ENCODE measurements at regions of chr5 and their contacts with region 1.

Region 1: DNA sequence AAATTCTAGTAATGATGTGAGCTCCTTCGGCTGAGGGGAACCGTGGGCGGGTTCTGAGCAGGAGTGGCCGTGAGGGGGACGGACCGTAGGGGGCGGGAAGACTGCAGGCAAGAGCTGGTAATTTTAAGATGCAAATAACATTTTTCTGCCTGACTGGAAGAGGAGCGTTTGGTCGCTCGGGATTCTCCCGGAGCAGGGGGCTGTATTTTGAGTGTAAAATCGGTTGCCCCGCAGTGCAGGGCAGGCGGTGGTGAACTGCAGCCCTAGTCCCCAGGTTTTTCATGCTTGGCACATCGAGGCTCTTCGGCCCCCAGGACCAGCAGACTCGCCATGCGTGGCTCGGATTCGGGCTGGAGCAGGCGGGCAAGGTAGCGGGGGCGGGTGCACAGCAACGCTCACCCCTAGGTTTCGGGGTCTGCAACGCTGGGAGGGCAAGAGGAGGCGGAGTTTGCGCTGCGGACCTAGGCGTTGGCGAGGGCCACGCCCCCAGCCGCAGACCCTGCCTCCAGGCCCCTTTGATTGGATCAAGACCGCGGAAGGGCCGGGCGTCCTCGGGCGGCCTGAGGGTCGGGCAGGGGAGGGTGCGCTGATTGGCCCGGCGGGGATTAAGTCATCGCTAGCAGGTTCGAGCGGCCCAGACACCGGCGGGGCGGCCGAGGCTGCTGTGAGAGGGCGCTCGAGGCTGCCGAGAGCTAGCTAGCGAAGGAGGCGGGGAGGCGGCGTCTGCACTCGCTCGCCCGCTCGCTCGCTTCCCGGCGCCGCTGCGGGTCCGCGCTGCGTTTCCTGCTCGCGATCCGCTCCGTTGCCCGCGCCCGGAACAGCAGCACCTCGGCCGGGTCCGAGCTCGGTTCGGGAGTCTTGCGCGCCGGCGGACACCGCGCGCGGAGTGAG is at the start of gene ARHGAP26:
- DNase-seq: peak; percentile 96
- H3K4me3 ChIP-seq: peak within 1 kb of the TSS; percentile 76
- H3K27ac ChIP-seq: peak within 1 kb of the TSS; percentile 35
- H3K4me1 ChIP-seq: peaks cover 15% of the 10 kb centered on the region
- CTCF ChIP-seq: no peak
- total RNA-seq, gene ARHGAP26: 7.0 and 7.5 TPM in 2 replicates

Region 2: GRCh38 chr5:142800776-142801494 is 30.9 kb after region 1 on chr5:
- CTCF ChIA-PET with region 1: interaction called, 3 read pairs
- POLR2A ChIA-PET with region 1: interaction called, 3 read pairs
- intact Hi-C with region 1: loop called (anchors 1 kb)
- DNase-seq: peak; percentile 85
- H3K4me3 ChIP-seq: peak overlapping the region; percentile 38
- H3K27ac ChIP-seq: peak overlapping the region; percentile 71
- H3K4me1 ChIP-seq: peaks cover 35% of the 10 kb centered on the region
- CTCF ChIP-seq: no peak

Region 3: GRCh38 chr5:142872795-142873194 is 102.8 kb after region 1 on chr5:
- CTCF ChIA-PET with region 1: no interaction called
- POLR2A ChIA-PET with region 1: no interaction called
- intact Hi-C with region 1: loop called (anchors 1 kb)
- DNase-seq: no peak
- H3K4me3 ChIP-seq: no peak overlapping the region
- H3K27ac ChIP-seq: no peak overlapping the region
- H3K4me1 ChIP-seq: no peaks in the 10 kb centered on the region
- CTCF ChIP-seq: no peak